OCI-LY7 (cell line): ENCODE measurements at regions of chr4 and their contacts with region 1.

Region 1: DNA sequence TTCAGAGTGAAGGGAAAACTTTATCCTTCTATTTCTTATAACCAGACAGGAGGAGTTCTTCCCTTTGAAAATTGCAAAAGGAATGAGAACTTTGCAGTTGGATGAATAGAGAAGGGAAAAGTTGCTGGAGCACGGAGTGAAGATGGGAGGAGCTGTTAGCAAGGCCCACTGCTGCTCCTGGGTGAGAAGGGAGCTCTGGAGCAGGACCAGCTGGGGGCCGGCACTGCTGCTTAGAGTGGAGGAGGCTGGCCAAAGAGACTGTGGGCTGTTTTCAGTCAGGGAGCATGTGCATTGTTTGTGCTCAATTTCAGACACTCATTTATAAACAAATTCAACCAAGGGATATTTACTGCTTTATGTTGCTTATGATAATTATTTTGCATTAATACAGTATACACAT is 164.2 kb downstream of the STIM2 start:
- DNase-seq: no peak
- H3K4me3 ChIP-seq: no peak overlapping the region
- H3K27ac ChIP-seq: no peak overlapping the region
- H3K4me1 ChIP-seq: peaks cover 12% of the 10 kb centered on the region
- CTCF ChIP-seq: no peak

Region 2: GRCh38 chr4:26441102-26441501 is 583.7 kb before region 1 on chr4:
- CTCF ChIA-PET with region 1: no interaction called
- POLR2A ChIA-PET with region 1: no interaction called
- intact Hi-C with region 1: loop called (anchors 5 kb)
- DNase-seq: no peak
- H3K4me3 ChIP-seq: no peak overlapping the region
- H3K27ac ChIP-seq: no peak overlapping the region
- H3K4me1 ChIP-seq: no peaks in the 10 kb centered on the region
- CTCF ChIP-seq: no peak

Region 3: DNA sequence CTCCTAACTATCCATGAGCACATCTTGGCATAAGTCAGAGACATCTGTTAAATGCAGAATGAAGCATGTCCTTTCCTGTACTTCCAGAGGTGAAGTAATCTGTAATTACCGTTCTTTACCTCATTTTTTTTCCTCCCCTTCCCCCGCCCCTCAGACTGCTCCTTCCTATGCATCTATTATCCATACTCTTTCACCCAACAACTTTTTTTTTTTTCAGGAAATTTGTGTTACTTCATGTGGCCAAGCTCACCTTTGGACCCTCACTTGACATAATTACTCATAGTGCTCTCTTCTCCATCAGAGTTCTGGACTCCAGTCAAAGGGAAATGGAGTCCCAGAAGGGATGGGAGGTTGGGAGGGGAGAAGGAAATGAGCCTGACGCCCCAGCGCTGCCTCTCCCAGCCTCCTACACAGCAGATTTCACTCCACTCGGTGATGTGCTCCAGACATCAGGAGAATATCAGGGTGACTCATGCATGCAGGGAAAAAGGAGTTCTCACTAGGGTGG is 404.6 kb after region 1 on chr4:
- CTCF ChIA-PET with region 1: no interaction called
- POLR2A ChIA-PET with region 1: no interaction called
- intact Hi-C with region 1: no loop called
- DNase-seq: no peak
- H3K4me3 ChIP-seq: no peak overlapping the region
- H3K27ac ChIP-seq: no peak overlapping the region
- H3K4me1 ChIP-seq: no peaks in the 10 kb centered on the region
- CTCF ChIP-seq: no peak